ENCODE measurements at regions of chr4 and their contacts with region 1.

Region 1: GRCh38 chr4:68175562-68176155 is 46.0 kb upstream of the TMPRSS11F start:
- DNase-seq: peak; percentile 47
- CTCF ChIP-seq: peak; percentile 57

Region 2: DNA sequence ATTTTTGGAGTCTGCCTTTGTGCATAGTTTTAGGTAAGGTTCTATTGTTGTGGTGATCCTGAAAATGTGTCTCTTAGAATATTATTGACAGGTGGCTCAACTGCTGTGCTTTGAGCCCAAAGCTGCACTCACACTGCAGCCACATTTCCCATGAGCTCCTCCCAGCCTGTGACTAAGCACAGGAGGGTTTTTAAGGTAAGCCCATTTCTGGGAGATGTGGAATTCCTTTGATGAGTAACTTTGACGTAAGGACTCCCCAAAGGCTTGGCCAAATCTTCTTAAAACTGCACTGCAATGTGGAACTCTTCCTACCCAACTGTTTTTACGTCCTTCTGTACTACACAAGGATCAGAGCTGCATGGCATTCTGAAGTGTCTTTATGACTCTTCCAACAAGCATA is 192.3 kb before region 1 on chr4:
- CTCF ChIA-PET with region 1: interaction called, 24 read pairs
- POLR2A ChIA-PET with region 1: no interaction called
- DNase-seq: no peak
- CTCF ChIP-seq: no peak

Measured in GM10248 (cell line).